ENCODE measurements at regions of chr12 and their contacts with region 1.

Region 1: DNA sequence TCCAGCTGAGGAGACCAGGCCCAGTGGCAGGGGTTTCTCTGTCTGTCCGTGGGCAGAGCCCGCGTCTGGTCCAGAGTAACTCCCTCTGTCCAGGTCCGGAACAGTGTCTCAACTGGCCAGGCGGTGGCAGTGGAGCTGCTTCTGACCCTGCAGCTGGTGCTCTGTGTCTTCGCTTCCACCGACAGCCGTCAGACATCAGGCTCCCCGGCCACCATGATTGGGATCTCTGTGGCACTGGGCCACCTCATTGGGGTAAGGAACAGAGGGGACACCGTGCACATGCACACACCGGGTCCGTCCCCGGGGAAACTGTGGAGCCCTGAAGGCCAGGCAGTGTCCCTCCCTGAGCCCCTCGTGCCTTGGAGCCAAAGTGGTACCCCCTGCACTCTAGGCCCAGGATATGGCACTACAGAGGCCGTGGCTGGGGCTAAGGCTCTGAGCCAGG is 1.5 kb downstream of the AQP6 start:
- DNase-seq: peak in 1 of 2 donors; percentile 88
- H3K4me3 ChIP-seq: no peak overlapping the region
- H3K27ac ChIP-seq: no peak overlapping the region
- H3K4me1 ChIP-seq: peaks cover 6% of the 10 kb centered on the region
- H3K27me3 ChIP-seq: no peaks in the 10 kb centered on the region
- CTCF ChIP-seq: peak in 2 of 3 experiments; percentile 23 to 41
- POLR2A ChIP-seq: no peak

Region 2: DNA sequence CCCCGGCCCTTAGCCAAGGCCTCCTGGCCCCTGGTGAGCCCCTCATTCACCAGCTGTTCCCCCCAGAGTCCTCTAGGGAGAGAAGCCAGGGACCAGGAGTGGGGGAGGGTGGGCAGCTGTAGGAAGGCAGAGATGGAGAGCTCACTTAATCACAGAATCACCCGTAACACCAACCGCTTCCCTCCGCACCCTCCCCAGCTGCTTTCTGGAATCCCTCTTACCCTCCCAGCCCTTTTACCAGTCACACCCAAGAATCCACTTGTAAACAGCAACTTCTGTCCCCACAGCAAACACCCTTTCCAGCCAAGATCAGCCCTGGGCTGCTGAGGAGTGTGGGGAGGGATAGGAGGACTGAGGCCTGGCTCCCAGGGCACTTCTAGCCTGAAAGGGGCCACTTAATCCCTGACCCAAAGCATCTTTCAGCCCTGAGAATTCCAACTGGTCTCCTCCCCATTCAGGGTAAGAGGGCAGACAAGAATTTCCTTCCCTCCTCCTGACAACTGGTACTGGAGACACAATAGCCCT is 164.8 kb before region 1 on chr12:
- intact Hi-C with region 1: no loop called
- DNase-seq: no peak
- H3K4me3 ChIP-seq: no peak overlapping the region
- H3K27ac ChIP-seq: peak overlapping the region; percentile 67
- H3K4me1 ChIP-seq: peaks cover 20% of the 10 kb centered on the region
- H3K27me3 ChIP-seq: no peaks in the 10 kb centered on the region
- CTCF ChIP-seq: no peak
- POLR2A ChIP-seq: no peak

Region 3: GRCh38 chr12:49873361-49873934 is 100.8 kb before region 1 on chr12:
- intact Hi-C with region 1: no loop called
- DNase-seq: no peak
- H3K4me3 ChIP-seq: no peak overlapping the region
- H3K27ac ChIP-seq: peak overlapping the region; percentile 39
- H3K4me1 ChIP-seq: peaks cover 23% of the 10 kb centered on the region
- H3K27me3 ChIP-seq: no peaks in the 10 kb centered on the region
- CTCF ChIP-seq: no peak
- POLR2A ChIP-seq: no peak

Region 4: DNA sequence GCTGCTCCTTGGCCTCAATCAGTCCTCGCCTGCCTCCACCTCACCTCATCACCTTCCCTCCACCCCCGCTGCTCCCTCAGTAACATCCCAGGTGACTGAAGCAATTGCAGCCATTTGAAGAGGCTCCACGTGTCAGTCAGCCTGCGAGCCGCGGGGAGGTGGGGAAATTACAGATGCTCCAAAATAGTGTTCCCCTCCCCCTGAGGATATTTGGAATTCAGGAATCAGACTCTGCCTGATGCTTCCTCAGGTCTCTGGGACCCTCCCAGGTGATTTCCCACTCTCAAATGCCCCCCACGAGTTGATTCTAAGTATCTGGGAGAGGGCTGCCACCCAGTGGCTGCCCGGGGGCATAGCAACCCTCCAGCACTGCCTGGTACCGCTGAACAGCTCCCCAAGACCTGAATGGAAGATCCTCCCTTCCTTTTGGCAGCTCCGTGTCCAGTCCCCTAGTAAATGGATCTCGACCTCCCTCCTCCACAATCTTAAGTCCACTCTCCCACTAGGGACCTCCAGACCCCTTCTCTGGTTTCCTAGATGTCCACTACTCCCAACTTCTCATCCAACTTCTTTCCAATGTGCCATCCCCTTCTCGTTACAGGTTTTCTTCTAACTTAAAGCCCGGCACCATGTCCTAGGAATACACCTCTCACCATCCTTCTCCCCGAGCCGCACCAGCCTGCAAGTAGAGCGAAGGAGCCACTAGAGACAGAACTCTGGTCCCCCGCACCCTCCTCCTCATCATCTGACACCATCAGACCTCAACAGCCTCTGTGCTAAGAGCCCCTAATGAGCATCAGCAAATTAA is 81.8 kb after region 1 on chr12:
- intact Hi-C with region 1: loop called (anchors 10 kb)
- DNase-seq: no peak
- H3K4me3 ChIP-seq: peak overlapping the region in 1 of 2 donors; percentile 14
- H3K27ac ChIP-seq: no peak overlapping the region
- H3K4me1 ChIP-seq: peaks cover 24% of the 10 kb centered on the region
- H3K27me3 ChIP-seq: no peaks in the 10 kb centered on the region
- CTCF ChIP-seq: peak; percentile 69 to 89 (median 87)
- POLR2A ChIP-seq: no peak